ENCODE measurements at regions of chr14 and their contacts with region 1.

Region 1: GRCh38 chr14:77076113-77076631 is 21.9 kb upstream of the CIPC start:
- DNase-seq: no peak
- ATAC-seq: no peak
- H3K4me3 ChIP-seq: no peak overlapping the region
- H3K4me3 Mint-ChIP-seq: no peak overlapping the region
- H3K27ac ChIP-seq: no peak overlapping the region
- H3K27ac Mint-ChIP-seq: no peak overlapping the region
- H3K4me1 ChIP-seq: no peaks in the 10 kb centered on the region
- H3K4me1 Mint-ChIP-seq: no peaks in the 10 kb centered on the region
- H3K27me3 ChIP-seq: no peaks in the 10 kb centered on the region
- H3K27me3 Mint-ChIP-seq: peaks cover 4% of the 10 kb centered on the region
- CTCF ChIP-seq: no peak

Region 2: GRCh38 chr14:76863724-76864407 is 212.3 kb before region 1 on chr14:
- CTCF ChIA-PET with region 1: interaction called, 499 read pairs
- POLR2A ChIA-PET with region 1: no interaction called
- intact Hi-C with region 1: no loop called
- DNase-seq: peak in 1 of 9 experiments; percentile 31
- ATAC-seq: no peak
- H3K4me3 ChIP-seq: no peak overlapping the region
- H3K4me3 Mint-ChIP-seq: no peak overlapping the region
- H3K27ac ChIP-seq: no peak overlapping the region
- H3K27ac Mint-ChIP-seq: no peak overlapping the region
- H3K4me1 ChIP-seq: peaks cover 21% of the 10 kb centered on the region
- H3K4me1 Mint-ChIP-seq: peaks cover 29% of the 10 kb centered on the region
- H3K27me3 ChIP-seq: no peaks in the 10 kb centered on the region
- H3K27me3 Mint-ChIP-seq: no peaks in the 10 kb centered on the region
- CTCF ChIP-seq: no peak

Region 3: DNA sequence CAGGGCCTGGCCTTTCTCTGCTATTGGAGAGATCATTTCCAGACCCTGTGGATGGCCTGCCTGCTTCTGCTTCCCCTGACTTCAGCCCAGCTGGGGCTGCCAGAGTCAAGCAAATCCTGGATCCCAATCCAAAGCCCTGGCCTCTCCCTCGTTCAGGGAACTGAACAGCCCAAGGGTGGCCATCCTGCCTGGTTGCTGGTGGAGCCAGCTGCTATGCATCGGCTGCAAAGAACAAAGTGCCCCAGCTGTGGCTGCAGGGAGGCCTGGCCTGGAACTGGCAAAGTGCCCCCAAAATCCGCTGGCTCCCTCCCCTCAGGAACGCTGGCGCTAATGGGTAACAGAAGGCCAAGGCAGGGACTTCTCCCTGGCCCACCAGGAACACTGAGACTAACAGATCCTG is 193.5 kb before region 1 on chr14:
- CTCF ChIA-PET with region 1: interaction called, 499 read pairs
- POLR2A ChIA-PET with region 1: no interaction called
- intact Hi-C with region 1: no loop called
- DNase-seq: no peak
- ATAC-seq: no peak
- H3K4me3 ChIP-seq: no peak overlapping the region
- H3K4me3 Mint-ChIP-seq: no peak overlapping the region
- H3K27ac ChIP-seq: no peak overlapping the region
- H3K27ac Mint-ChIP-seq: no peak overlapping the region
- H3K4me1 ChIP-seq: no peaks in the 10 kb centered on the region
- H3K4me1 Mint-ChIP-seq: peaks cover 5% of the 10 kb centered on the region
- H3K27me3 ChIP-seq: no peaks in the 10 kb centered on the region
- H3K27me3 Mint-ChIP-seq: no peaks in the 10 kb centered on the region
- CTCF ChIP-seq: no peak

Region 4: DNA sequence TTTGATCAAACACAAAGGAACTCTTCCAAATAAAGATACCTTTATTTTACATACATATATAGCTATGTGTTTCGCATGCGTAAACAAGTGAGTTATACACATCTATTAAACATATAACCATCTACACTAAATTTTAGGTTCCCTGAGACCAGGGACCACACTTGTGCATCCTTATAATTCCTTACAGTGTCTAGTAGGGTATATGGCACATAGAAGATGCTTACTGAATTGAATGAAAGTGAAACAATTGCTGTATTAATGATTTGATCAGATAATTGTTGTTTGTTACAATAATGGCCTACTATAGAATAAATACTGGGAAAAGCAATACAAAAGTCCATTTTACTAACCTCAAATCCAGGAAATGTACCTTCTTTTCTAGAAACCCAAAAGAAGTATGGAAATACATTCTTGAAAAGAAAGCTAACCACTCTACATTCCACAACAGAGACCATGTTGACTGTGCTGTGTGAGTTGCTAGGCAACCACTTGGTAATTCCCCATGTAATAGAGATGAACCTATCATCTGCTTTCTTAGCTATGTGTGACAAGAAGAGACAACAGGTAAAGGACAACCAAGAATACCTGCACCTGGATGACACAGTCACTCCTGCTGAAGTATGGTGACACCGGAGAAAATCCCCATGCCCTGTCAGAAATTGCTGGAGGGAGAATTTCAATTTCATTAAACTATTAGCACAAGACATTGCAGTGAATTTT is 10.0 kb after region 1 on chr14:
- CTCF ChIA-PET with region 1: interaction called, 40 read pairs
- POLR2A ChIA-PET with region 1: no interaction called
- intact Hi-C with region 1: no loop called
- DNase-seq: peak in 2 of 9 experiments; percentile 44 to 57
- ATAC-seq: peak; percentile 48
- H3K4me3 ChIP-seq: no peak overlapping the region
- H3K4me3 Mint-ChIP-seq: no peak overlapping the region
- H3K27ac ChIP-seq: no peak overlapping the region
- H3K27ac Mint-ChIP-seq: no peak overlapping the region
- H3K4me1 ChIP-seq: peaks cover 6% of the 10 kb centered on the region
- H3K4me1 Mint-ChIP-seq: peaks cover 4% of the 10 kb centered on the region
- H3K27me3 ChIP-seq: peaks cover 0 to 3% of the 10 kb centered on the region in 2 experiments
- H3K27me3 Mint-ChIP-seq: peaks cover 4% of the 10 kb centered on the region
- CTCF ChIP-seq: no peak

Region 5: DNA sequence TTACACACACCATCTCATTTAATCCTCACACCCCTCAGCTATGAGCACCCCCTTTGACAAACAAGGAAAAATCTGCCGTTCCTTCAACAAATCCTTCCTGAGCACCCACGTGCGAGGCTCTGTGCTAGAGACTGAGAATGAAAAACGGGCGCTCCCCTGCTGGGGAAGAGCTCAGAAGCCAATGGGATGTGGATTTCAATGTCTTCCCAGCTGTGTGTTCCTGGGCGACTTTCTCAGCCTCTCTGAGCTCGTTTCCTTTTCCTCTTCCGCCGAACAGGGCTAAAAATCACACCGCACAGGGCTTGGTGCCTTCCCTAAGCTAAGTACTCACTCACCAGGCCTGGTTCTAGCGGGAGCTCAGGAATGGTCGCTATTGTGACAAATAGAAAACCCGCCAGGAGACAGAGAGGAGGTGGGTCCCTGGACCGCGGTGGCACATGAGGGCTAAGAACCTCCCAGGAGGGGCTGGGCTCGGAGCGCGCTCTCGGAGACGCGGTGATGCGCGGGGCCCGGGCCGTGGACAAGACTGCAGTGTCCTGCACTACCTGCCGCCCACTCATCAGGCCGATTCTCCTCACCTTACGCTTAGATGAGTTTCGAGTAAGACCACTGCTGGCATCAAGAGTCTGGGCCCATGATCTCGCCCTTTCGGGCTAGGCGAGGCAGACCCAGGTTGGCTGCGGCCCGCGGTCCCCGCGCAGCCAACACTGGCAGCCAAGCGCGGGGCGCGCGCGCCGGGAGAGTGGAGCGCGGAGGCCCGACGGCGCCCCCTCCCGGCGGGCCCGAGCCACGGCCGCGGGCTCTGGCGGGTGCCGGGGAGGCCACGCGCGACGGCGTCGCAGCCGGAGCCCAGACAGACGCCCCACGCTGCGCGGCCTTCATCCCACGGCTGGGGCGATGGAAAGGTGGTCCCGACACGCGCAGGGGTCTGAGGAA is 48.4 kb after region 1 on chr14:
- CTCF ChIA-PET with region 1: interaction called, 17 read pairs
- POLR2A ChIA-PET with region 1: no interaction called
- intact Hi-C with region 1: no loop called
- DNase-seq: peak; percentile 25 to 85 (median 63)
- ATAC-seq: peak; percentile 79
- H3K4me3 ChIP-seq: peak overlapping the region; percentile 57 to 63
- H3K4me3 Mint-ChIP-seq: peak overlapping the region; percentile 81
- H3K27ac ChIP-seq: no peak overlapping the region
- H3K27ac Mint-ChIP-seq: peak overlapping the region; percentile 80
- H3K4me1 ChIP-seq: peaks cover 23% of the 10 kb centered on the region
- H3K4me1 Mint-ChIP-seq: peaks cover 47% of the 10 kb centered on the region
- H3K27me3 ChIP-seq: peaks cover 0 to 8% of the 10 kb centered on the region in 2 experiments
- H3K27me3 Mint-ChIP-seq: peaks cover 30% of the 10 kb centered on the region
- CTCF ChIP-seq: peak; percentile 63